Activated T-helper 2 cell treated with anti-CD3 and anti-CD28 coated beads, Interferon-gamma antibody, Interleukin-2, Interleukin-4, amounts not matched to agents 10 μg/mL and 5 μg/mL and 100 μg/mL, durations not matched to agents 14 hours and 24 hours and 36 hours (primary cell): ENCODE measurements at regions of chr22 and their contacts with region 1.

Region 1: DNA sequence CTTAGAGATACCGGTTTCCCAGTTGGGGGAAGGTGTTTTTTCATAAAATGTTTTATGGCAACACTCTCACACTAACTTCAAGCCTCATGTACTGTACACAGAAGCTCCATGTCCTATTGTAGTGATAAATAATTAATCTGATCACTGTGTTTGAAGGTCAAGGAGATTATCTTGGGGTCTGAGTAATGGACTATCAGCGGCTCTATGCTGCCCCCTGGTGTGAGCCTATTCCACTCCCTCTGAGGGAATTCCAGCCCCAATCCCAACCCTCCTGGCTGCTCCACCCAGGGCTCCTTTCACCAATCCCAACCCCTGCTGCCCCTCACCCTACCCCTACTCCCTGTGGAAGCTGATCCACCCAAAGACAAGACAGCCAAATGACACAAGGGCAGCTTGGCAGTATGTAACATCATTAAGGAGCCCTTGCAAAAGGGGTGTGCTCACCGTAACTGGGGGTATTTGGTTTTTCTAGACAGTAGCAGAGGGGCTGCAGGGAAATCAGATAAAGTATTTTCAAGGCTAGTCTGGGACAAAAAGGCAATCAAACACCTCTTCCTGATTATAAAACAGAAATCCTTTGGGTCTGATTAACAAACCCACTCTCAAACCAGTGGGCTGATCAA is 22.3 kb downstream of the HPS4 start:
- DNase-seq: no peak
- H3K4me3 Mint-ChIP-seq: no peak overlapping the region
- H3K27ac Mint-ChIP-seq: no peak overlapping the region
- H3K4me1 Mint-ChIP-seq: peaks cover 1% of the 10 kb centered on the region
- H3K27me3 Mint-ChIP-seq: no peaks in the 10 kb centered on the region

Region 2: GRCh38 chr22:26364066-26365015 is 97.0 kb before region 1 on chr22:
- intact Hi-C with region 1: loop called (anchors 1 kb)
- DNase-seq: peak; percentile 46
- H3K4me3 Mint-ChIP-seq: no peak overlapping the region
- H3K27ac Mint-ChIP-seq: no peak overlapping the region
- H3K4me1 Mint-ChIP-seq: peaks cover 8% of the 10 kb centered on the region
- H3K27me3 Mint-ChIP-seq: peaks cover 19% of the 10 kb centered on the region

Region 3: GRCh38 chr22:26398741-26399153 is 62.6 kb before region 1 on chr22:
- intact Hi-C with region 1: loop called (anchors 1 kb)
- DNase-seq: peak; percentile 14
- H3K4me3 Mint-ChIP-seq: no peak overlapping the region
- H3K27ac Mint-ChIP-seq: no peak overlapping the region
- H3K4me1 Mint-ChIP-seq: peaks cover 2% of the 10 kb centered on the region
- H3K27me3 Mint-ChIP-seq: peaks cover under 1% of the 10 kb centered on the region

Region 4: GRCh38 chr22:26632422-26633155 is 171.3 kb after region 1 on chr22:
- intact Hi-C with region 1: no loop called
- DNase-seq: no peak
- H3K4me3 Mint-ChIP-seq: no peak overlapping the region
- H3K27ac Mint-ChIP-seq: no peak overlapping the region
- H3K4me1 Mint-ChIP-seq: peaks cover 5% of the 10 kb centered on the region
- H3K27me3 Mint-ChIP-seq: peaks cover 7% of the 10 kb centered on the region